H1 (cell line): ENCODE measurements at regions of chr15 and their contacts with region 1.

Region 1: DNA sequence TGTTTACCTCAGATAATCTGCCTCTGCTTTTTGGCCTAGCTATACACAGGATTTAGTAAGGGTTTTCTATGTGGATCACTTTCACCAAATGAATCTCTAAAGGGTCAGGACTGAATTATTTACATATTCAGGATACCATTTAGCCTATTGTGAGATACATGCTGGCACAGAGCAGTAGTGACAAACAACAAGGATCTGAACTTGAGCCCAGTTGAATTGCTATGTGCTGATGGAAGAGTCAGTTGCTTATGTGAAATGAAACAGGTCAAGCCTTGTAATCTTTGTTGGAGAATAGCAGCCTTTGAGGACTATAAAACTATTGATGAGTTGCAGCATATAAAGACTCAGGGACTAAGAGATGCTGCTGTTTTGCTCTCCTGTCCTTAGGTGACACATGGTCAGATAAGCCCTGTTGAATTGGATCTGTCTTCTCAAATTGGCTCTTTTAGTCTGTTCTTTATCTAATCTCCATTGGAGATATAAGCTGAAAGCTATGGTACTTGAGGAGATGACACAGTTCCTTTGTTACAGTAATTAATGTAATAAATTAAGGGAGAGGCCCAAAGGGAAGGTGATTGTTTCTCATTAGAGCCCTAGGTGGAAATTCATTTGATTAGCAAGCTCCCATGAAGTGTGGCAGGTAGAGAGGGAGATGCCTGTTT is 30.4 kb downstream of the ZNF609 start:
- DNase-seq: no peak
- H3K4me3 ChIP-seq: no peak overlapping the region
- H3K27ac ChIP-seq: no peak overlapping the region
- H3K4me1 ChIP-seq: peaks cover 0 to 2% (median 0%) of the 10 kb centered on the region in 4 experiments; a peak in 1 of 7 replicates
- H3K27me3 ChIP-seq: no peaks in the 10 kb centered on the region
- CTCF ChIP-seq: no peak
- EP300 ChIP-seq: no peak
- POLR2A ChIP-seq: no peak
- RAD21 ChIP-seq: no peak

Region 2: DNA sequence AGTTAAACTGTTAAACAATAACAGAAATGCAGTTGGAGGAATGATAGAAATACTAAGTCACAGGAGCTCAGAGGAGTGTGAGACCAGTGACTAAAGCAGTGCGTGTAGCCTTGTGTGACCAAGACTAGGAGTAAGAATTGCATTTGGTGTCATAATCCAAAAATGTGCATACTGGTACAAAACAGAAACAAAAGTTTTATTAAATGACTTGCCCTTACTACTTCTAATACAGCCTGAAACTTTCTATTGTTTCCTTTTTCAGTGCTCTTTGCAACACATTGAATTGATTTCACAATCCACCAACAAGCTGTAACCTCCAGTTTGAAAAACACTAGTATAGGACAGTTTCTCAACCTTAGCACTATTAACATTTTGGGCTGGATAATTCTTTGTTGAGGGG is 377.8 kb before region 1 on chr15:
- CTCF ChIA-PET with region 1: no interaction called
- POLR2A ChIA-PET with region 1: no interaction called
- DNase-seq: no peak
- H3K4me3 ChIP-seq: no peak overlapping the region
- H3K27ac ChIP-seq: no peak overlapping the region
- H3K4me1 ChIP-seq: peaks cover 0 to 4% (median 0%) of the 10 kb centered on the region in 4 experiments; a peak in 1 of 7 replicates
- H3K27me3 ChIP-seq: no peaks in the 10 kb centered on the region
- CTCF ChIP-seq: no peak
- EP300 ChIP-seq: no peak
- POLR2A ChIP-seq: no peak
- RAD21 ChIP-seq: no peak

Region 3: GRCh38 chr15:64501396-64501715 is 10.6 kb after region 1 on chr15:
- CTCF ChIA-PET with region 1: interaction called, 3 read pairs
- POLR2A ChIA-PET with region 1: interaction called, 10 read pairs
- DNase-seq: no peak
- H3K4me3 ChIP-seq: no peak overlapping the region
- H3K27ac ChIP-seq: no peak overlapping the region
- H3K4me1 ChIP-seq: no peaks in the 10 kb centered on the region; a peak in 1 of 7 replicates
- H3K27me3 ChIP-seq: no peaks in the 10 kb centered on the region
- CTCF ChIP-seq: no peak
- EP300 ChIP-seq: no peak
- POLR2A ChIP-seq: no peak
- RAD21 ChIP-seq: no peak